Activated naive CD4-positive, alpha-beta T cell treated with anti-CD3 and anti-CD28 coated beads for 36 hours (primary cell): ENCODE measurements at regions of chr16 and their contacts with region 1.

Region 1: GRCh38 chr16:67055712-67056487 is 27.0 kb downstream of the CBFB start:
- DNase-seq: peak; percentile 26
- H3K4me3 Mint-ChIP-seq: no peak overlapping the region
- H3K27ac Mint-ChIP-seq: peak overlapping the region; percentile 32
- H3K4me1 Mint-ChIP-seq: peaks cover 50% of the 10 kb centered on the region
- H3K27me3 Mint-ChIP-seq: no peaks in the 10 kb centered on the region

Region 2: GRCh38 chr16:66984892-66985311 is 71.0 kb before region 1 on chr16:
- CTCF ChIA-PET with region 1: no interaction called
- intact Hi-C with region 1: loop called (anchors 2 kb)
- DNase-seq: peak; percentile 81
- H3K4me3 Mint-ChIP-seq: no peak overlapping the region
- H3K27ac Mint-ChIP-seq: peak overlapping the region; percentile 96
- H3K4me1 Mint-ChIP-seq: peaks cover 30% of the 10 kb centered on the region
- H3K27me3 Mint-ChIP-seq: no peaks in the 10 kb centered on the region

Region 3: DNA sequence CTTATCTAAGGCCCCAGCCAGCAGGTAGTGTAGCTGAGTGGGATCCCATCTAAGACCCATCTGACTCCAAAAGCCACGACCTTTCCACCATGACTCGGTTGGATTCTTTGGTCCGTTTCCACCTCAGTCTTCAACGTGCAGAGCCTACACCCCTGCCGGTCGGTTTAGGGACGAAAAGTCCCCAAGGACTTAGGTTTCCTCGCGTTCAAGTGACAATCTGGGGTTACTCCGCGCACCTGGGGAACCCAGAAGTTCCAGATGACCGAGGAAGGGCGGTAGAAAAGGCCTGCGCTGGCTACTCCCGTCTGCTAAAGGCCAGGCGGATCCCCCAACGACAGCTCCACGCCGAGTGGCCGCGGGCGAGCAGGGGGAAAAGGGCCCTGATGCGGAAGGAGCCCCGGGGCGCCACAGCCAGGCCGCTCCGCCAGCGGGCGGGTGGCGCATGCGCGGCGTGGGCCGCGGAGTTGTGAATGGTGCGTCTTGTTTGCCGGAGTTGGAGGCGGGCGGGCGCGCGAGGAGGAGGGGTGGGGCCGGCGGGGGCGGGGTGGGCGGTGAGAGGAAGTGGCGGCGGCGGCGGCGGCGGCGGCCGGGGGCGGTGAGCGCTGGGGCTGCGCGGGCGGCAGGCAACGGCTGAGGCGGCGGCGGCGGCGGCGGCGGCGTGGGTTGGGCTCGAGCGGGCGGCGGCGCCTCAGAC is 27.2 kb before region 1 on chr16 and contains the start of gene CBFB:
- CTCF ChIA-PET with region 1: no interaction called
- intact Hi-C with region 1: loop called (anchors 2 kb)
- DNase-seq: peak; percentile 93
- H3K4me3 Mint-ChIP-seq: peak within 1 kb of the TSS; percentile 86
- H3K27ac Mint-ChIP-seq: peak within 1 kb of the TSS; percentile 91
- H3K4me1 Mint-ChIP-seq: peaks cover 38% of the 10 kb centered on the region
- H3K27me3 Mint-ChIP-seq: no peaks in the 10 kb centered on the region
- total RNA-seq, gene CBFB: 79.6 to 86.8 TPM

Region 4: DNA sequence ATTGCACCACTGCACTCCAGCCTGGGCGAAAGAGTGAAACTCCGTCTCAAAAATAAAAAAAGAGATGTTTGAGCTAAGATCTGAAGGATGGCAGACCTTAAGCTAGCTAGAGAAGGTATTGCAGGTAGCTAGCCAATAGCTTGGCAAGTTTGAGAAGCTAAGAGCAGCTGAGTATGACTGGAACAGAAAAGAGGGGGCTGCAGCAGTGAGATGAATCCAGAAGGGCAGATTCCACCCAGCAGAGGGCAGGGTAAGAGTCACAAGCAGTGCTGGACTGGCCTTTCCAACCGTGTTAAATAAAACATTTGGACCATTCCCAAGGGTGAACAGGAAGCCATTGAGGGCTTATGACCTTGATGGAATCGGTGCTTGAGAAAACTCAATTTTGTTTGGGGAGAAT is 48.2 kb after region 1 on chr16:
- CTCF ChIA-PET with region 1: interaction called, 3 read pairs
- intact Hi-C with region 1: loop called (anchors 5 kb)
- DNase-seq: no peak
- H3K4me3 Mint-ChIP-seq: no peak overlapping the region
- H3K27ac Mint-ChIP-seq: peak overlapping the region; percentile 28
- H3K4me1 Mint-ChIP-seq: peaks cover 7% of the 10 kb centered on the region
- H3K27me3 Mint-ChIP-seq: no peaks in the 10 kb centered on the region

Region 5: GRCh38 chr16:67279296-67280089 is 223.6 kb after region 1 on chr16 and contains the start of gene PLEKHG4:
- CTCF ChIA-PET with region 1: no interaction called
- intact Hi-C with region 1: no loop called
- DNase-seq: peak; percentile 85
- H3K4me3 Mint-ChIP-seq: peak within 1 kb of the TSS; percentile 79
- H3K27ac Mint-ChIP-seq: peak within 1 kb of the TSS; percentile 86
- H3K4me1 Mint-ChIP-seq: peaks cover 20% of the 10 kb centered on the region
- H3K27me3 Mint-ChIP-seq: no peaks in the 10 kb centered on the region
- total RNA-seq, gene PLEKHG4: 14.3 to 14.4 TPM